Endothelial cell of umbilical vein (primary cell): ENCODE measurements at regions of chr2 and their contacts with region 1.

Region 1: GRCh38 chr2:174697255-174697654 is 67.0 kb downstream of the CHRNA1 start:
- DNase-seq: peak; percentile 57
- H3K4me3 ChIP-seq: no peak overlapping the region
- H3K27ac ChIP-seq: no peak overlapping the region
- H3K4me1 ChIP-seq: no peaks in the 10 kb centered on the region
- H3K27me3 ChIP-seq: peaks cover 9 to 11% of the 10 kb centered on the region in 2 experiments
- CTCF ChIP-seq: peak; percentile 79 to 89
- POLR2A ChIP-seq: no peak

Region 2: DNA sequence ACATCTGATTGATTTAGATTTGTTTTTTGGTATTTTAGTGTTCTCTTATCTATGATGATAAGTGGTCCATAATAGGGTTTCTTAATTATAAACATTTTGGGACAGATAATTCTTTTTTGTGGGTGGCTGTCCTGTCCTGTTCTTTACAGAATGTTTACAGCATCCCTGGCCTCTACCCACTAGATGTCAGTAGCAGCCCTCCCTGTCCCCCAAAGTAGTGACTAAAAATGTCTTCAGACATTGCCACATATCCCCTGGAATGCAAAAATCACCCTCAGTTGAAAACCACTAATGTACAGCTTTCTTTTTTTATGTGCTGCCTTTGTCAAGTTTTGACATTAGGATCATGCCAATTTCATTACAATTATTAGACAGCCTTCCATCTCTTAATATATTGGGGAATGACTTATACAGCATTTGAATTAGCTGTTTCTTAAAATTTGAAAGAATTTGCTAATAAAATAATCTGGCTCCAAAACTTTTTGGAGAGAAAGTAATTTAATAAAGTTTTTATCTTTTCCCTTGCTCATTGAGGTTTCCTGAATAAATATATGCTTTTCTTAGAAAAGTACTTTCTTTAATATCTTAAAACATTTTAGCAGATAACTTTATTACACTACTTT is 119.2 kb before region 1 on chr2:
- CTCF ChIA-PET with region 1: interaction called, 30 read pairs
- POLR2A ChIA-PET with region 1: no interaction called
- dilution Hi-C with region 1: no loop called
- intact Hi-C with region 1: no loop called
- DNase-seq: peak; percentile 55
- H3K4me3 ChIP-seq: no peak overlapping the region
- H3K27ac ChIP-seq: no peak overlapping the region
- H3K4me1 ChIP-seq: no peaks in the 10 kb centered on the region
- H3K27me3 ChIP-seq: no peaks in the 10 kb centered on the region
- CTCF ChIP-seq: peak; percentile 43 to 56
- POLR2A ChIP-seq: no peak

Region 3: GRCh38 chr2:174748948-174749347 is 51.7 kb after region 1 on chr2:
- CTCF ChIA-PET with region 1: interaction called, 21 read pairs
- POLR2A ChIA-PET with region 1: no interaction called
- dilution Hi-C with region 1: no loop called
- intact Hi-C with region 1: loop called (anchors 5 kb)
- DNase-seq: peak; percentile 66
- H3K4me3 ChIP-seq: no peak overlapping the region
- H3K27ac ChIP-seq: no peak overlapping the region
- H3K4me1 ChIP-seq: no peaks in the 10 kb centered on the region
- H3K27me3 ChIP-seq: peaks cover 0 to 2% of the 10 kb centered on the region in 2 experiments
- CTCF ChIP-seq: peak; percentile 67 to 74
- POLR2A ChIP-seq: no peak

Region 4: GRCh38 chr2:175111200-175111657 is 414.0 kb after region 1 on chr2:
- CTCF ChIA-PET with region 1: no interaction called
- POLR2A ChIA-PET with region 1: no interaction called
- dilution Hi-C with region 1: no loop called
- intact Hi-C with region 1: loop called (anchors 5 kb)
- DNase-seq: peak; percentile 63
- H3K4me3 ChIP-seq: no peak overlapping the region
- H3K27ac ChIP-seq: no peak overlapping the region
- H3K4me1 ChIP-seq: no peaks in the 10 kb centered on the region
- H3K27me3 ChIP-seq: no peaks in the 10 kb centered on the region
- CTCF ChIP-seq: peak; percentile 24 to 42
- POLR2A ChIP-seq: no peak

Region 5: GRCh38 chr2:175282290-175282689 is 585.0 kb after region 1 on chr2:
- CTCF ChIA-PET with region 1: interaction called, 11 read pairs
- POLR2A ChIA-PET with region 1: no interaction called
- dilution Hi-C with region 1: no loop called
- intact Hi-C with region 1: loop called (anchors 2 kb)
- DNase-seq: peak; percentile 44
- H3K4me3 ChIP-seq: no peak overlapping the region
- H3K27ac ChIP-seq: no peak overlapping the region
- H3K4me1 ChIP-seq: no peaks in the 10 kb centered on the region
- H3K27me3 ChIP-seq: peaks cover 17 to 18% of the 10 kb centered on the region in 2 experiments
- CTCF ChIP-seq: peak; percentile 20 to 26
- POLR2A ChIP-seq: no peak

Region 6: GRCh38 chr2:176096986-176097819 is 1399.9 kb after region 1 on chr2:
- CTCF ChIA-PET with region 1: interaction called, 10 read pairs
- POLR2A ChIA-PET with region 1: no interaction called
- dilution Hi-C with region 1: no loop called
- intact Hi-C with region 1: loop called (anchors 5 kb)
- DNase-seq: peak; percentile 72
- H3K4me3 ChIP-seq: peak overlapping the region in 1 of 3 experiments; percentile 17
- H3K27ac ChIP-seq: no peak overlapping the region
- H3K4me1 ChIP-seq: peaks cover 5% of the 10 kb centered on the region
- H3K27me3 ChIP-seq: peaks cover 87 to 97% of the 10 kb centered on the region in 2 experiments
- CTCF ChIP-seq: peak; percentile 83 to 93
- POLR2A ChIP-seq: no peak